A673 (cell line): ENCODE measurements at regions of chr11 and their contacts with region 1.

Region 1: DNA sequence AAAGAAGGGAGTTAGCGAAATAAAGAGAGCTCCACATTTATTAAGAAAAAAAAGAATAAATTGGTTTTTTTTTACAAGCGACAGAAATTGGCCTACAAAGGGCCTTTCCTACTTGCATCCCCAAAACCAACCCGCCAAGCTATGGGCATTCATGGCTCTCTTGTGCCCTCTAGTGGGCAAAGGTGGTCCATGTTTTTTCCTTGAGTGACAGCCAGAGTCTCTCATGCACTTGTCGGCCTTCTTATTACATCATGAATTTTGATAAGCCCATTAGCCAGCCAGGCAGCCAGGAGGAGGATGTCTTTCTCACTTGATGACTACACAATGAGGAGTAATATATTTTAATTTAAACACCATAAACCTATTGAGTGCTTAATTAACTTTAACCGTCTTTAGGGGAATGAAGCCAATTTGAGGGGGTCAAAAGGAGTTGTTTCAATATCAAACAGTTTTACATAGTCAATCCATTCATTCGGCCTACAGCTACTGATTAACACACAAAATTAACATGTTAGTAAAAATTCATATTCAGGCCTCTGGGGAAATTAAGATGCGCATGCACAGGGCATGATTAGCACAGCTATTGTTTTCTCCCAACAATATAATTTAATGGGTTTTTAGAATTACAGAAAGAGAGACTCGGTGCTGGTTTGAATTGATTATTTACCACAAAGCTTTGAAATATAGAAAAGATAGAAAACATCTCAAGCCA is 85.5 kb downstream of the RCN1 start:
- DNase-seq: peak; percentile 100
- H3K4me3 ChIP-seq: no peak overlapping the region
- H3K27ac ChIP-seq: no peak overlapping the region
- H3K4me1 ChIP-seq: peaks cover 4% of the 10 kb centered on the region
- H3K27me3 ChIP-seq: peaks cover 38% of the 10 kb centered on the region
- CTCF ChIP-seq: peak; percentile 100

Region 2: DNA sequence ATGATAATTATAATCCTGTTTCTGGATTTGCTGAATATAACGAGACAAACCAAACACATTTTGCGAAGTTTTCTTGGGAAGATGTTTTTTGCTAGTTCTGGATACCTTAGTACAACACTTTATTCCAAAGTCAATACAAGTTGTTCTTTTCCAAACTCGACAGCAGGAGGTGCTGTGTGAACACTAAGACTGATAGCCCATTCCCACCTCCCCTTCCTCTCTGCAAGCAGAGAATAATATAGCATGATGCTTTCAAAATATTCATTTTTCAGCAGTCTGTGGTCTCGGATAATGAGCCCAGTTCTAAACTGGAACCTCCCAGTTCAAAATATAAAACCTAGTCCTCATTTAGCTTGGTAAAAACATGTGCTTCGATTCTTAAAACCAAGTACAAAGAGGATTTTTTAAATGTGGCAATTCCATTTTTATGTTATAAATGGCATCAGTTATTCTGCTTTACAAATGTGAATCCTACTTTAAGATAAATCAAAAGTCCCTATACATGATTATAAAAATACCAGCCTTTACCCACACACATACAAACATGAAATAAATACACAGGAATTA is 936.0 kb before region 1 on chr11:
- CTCF ChIA-PET with region 1: interaction called, 4 read pairs
- POLR2A ChIA-PET with region 1: no interaction called
- intact Hi-C with region 1: loop called (anchors 2 kb)
- DNase-seq: peak; percentile 91
- H3K4me3 ChIP-seq: no peak overlapping the region
- H3K27ac ChIP-seq: no peak overlapping the region
- H3K4me1 ChIP-seq: peaks cover 20% of the 10 kb centered on the region
- H3K27me3 ChIP-seq: no peaks in the 10 kb centered on the region
- CTCF ChIP-seq: peak; percentile 99

Region 3: DNA sequence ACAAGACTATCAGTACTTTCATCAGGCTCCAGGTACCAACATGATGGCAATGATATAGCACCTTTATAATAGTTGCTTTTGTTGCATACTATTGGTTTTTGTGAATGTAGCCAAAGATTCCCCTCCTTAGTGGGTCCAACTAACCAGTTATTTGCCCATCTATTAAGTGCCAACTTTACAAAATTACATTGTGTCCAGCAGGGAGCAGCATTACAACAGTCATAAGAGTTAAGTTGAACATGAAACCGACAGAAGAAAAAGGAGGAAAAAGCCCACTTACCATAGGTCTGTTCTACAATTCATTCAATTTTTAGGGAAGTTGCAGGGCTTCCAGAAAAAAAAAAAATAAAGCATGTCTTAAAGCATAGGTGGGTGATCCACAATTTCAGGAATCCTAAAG is 688.5 kb before region 1 on chr11:
- CTCF ChIA-PET with region 1: no interaction called
- POLR2A ChIA-PET with region 1: no interaction called
- intact Hi-C with region 1: loop called (anchors 5 kb)
- DNase-seq: peak; percentile 91
- H3K4me3 ChIP-seq: no peak overlapping the region
- H3K27ac ChIP-seq: no peak overlapping the region
- H3K4me1 ChIP-seq: peaks cover 6% of the 10 kb centered on the region
- H3K27me3 ChIP-seq: no peaks in the 10 kb centered on the region
- CTCF ChIP-seq: peak; percentile 92

Region 4: DNA sequence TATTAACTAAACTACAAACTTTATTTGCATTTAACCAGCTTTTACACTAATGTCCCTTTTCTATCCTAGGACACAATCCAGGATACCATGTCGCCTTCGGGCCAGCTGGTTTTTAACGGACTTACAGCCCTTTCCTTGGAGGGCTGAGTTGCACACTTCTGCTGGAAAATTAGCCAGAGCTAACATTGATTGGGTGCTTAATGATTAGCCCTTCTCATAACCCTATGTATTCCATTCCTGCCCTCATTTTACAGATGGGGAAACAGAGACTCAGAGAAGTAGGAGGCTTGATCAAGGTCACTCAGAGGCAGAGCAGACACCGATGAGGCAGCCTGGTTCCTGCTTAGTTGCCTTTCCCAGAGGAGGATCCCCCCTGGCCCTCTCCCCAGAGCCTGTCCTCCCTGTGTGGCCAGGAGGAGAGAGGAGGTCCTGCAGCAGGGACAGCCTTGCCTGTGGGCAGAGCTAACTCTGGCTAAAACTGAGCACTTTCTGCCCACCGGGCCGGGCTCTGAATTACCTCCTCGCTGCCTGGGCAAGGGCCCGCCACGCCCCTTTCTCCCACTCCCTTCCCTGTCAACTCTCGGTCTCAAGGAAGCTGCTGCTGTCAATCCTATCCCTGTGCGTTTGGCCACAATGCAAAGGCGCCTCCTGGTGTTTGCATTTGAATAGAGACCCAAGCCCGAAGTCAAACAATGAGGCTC is 305.6 kb before region 1 on chr11:
- CTCF ChIA-PET with region 1: interaction called, 3 read pairs
- POLR2A ChIA-PET with region 1: no interaction called
- intact Hi-C with region 1: loop called (anchors 10 kb)
- DNase-seq: peak; percentile 96
- H3K4me3 ChIP-seq: no peak overlapping the region
- H3K27ac ChIP-seq: no peak overlapping the region
- H3K4me1 ChIP-seq: no peaks in the 10 kb centered on the region
- H3K27me3 ChIP-seq: peaks cover 63% of the 10 kb centered on the region
- CTCF ChIP-seq: peak; percentile 100

Region 5: GRCh38 chr11:31968461-31969358 is 207.7 kb before region 1 on chr11:
- CTCF ChIA-PET with region 1: no interaction called
- POLR2A ChIA-PET with region 1: no interaction called
- intact Hi-C with region 1: no loop called
- DNase-seq: no peak
- H3K4me3 ChIP-seq: no peak overlapping the region
- H3K27ac ChIP-seq: no peak overlapping the region
- H3K4me1 ChIP-seq: peaks cover 15% of the 10 kb centered on the region
- H3K27me3 ChIP-seq: peaks cover 53% of the 10 kb centered on the region
- CTCF ChIP-seq: no peak

Region 6: GRCh38 chr11:32071811-32072210 is 104.6 kb before region 1 on chr11:
- CTCF ChIA-PET with region 1: no interaction called
- POLR2A ChIA-PET with region 1: interaction called, 16 read pairs
- intact Hi-C with region 1: no loop called
- DNase-seq: peak; percentile 63
- H3K4me3 ChIP-seq: no peak overlapping the region
- H3K27ac ChIP-seq: no peak overlapping the region
- H3K4me1 ChIP-seq: peaks cover 12% of the 10 kb centered on the region
- H3K27me3 ChIP-seq: peaks cover 70% of the 10 kb centered on the region
- CTCF ChIP-seq: peak; percentile 61